ENCODE measurements at regions of chr15 and their contacts with region 1.

Region 1: DNA sequence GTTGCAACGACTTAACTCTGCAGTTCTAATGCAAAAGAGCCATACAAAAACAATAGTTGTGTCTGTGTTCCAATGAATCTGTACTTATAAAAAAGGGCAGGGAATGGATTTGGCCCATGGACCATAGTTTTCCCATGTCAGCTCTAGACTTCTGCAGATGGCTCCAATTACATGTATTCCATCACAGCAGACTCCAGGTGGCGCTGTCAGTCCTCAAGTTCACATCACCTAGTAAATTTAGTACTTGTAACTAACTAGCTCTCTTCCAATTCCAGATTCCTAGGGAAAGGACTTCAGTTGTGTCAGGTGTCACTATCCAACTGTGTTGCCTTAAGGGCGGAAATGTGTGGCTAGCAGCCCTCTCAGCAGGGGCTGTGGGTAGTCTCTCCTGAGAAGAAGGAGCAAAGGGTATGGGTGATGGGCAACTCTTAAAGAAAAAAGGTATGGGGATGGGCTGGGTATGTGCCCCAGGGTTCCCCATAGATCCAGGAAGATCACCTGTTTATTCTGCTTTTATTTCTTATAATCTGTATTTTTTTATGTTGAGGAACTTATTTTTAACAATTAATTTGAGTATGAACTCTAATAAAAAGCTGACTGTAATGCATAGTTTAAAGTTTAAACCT is 36.2 kb downstream of the BBS4 start:
- DNase-seq: peak; percentile 72
- ATAC-seq: peak; percentile 58
- H3K4me3 ChIP-seq: no peak overlapping the region
- H3K27ac ChIP-seq: no peak overlapping the region
- H3K4me1 ChIP-seq: no peaks in the 10 kb centered on the region
- H3K27me3 ChIP-seq: no peaks in the 10 kb centered on the region
- CTCF ChIP-seq: peak; percentile 86

Region 2: DNA sequence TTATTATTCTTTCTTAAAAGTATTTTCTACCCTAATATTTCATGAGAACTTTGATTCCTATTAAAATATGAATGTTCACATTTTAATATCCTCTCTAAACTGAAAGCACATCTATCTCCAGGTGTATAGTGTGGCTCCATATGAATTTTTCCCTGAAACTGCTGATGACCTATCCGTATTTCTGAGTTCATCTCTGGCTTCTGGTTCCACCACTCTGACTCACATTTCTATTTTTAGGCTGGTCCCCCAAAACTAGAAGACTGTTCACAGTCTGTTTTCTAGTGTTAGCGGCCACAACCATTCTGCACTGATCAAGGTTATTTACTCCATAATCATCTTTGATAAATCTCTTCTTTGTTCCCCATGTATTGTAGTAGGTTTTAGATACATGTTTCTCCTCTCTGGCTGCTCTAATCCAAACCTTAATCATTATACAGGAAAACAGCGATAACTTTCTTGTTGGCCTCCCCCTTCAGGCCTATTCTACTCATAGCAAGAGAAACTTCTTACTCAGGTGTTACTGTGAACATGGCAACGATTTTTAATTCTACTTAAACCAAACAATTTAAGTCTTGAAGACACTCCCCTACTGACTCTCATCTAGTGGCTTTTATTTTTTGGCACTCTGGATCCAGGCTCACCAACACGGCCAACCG is 48.6 kb after region 1 on chr15:
- CTCF ChIA-PET with region 1: no interaction called
- POLR2A ChIA-PET with region 1: interaction called, 4 read pairs
- intact Hi-C with region 1: loop called (anchors 1 kb)
- DNase-seq: no peak
- ATAC-seq: no peak
- H3K4me3 ChIP-seq: no peak overlapping the region
- H3K27ac ChIP-seq: no peak overlapping the region
- H3K4me1 ChIP-seq: no peaks in the 10 kb centered on the region
- H3K27me3 ChIP-seq: no peaks in the 10 kb centered on the region
- CTCF ChIP-seq: peak; percentile 43

Measured in PC-3 (cell line).